IMR-90 (cell line): ENCODE measurements at regions of chr19 and their contacts with region 1.

Region 1: DNA sequence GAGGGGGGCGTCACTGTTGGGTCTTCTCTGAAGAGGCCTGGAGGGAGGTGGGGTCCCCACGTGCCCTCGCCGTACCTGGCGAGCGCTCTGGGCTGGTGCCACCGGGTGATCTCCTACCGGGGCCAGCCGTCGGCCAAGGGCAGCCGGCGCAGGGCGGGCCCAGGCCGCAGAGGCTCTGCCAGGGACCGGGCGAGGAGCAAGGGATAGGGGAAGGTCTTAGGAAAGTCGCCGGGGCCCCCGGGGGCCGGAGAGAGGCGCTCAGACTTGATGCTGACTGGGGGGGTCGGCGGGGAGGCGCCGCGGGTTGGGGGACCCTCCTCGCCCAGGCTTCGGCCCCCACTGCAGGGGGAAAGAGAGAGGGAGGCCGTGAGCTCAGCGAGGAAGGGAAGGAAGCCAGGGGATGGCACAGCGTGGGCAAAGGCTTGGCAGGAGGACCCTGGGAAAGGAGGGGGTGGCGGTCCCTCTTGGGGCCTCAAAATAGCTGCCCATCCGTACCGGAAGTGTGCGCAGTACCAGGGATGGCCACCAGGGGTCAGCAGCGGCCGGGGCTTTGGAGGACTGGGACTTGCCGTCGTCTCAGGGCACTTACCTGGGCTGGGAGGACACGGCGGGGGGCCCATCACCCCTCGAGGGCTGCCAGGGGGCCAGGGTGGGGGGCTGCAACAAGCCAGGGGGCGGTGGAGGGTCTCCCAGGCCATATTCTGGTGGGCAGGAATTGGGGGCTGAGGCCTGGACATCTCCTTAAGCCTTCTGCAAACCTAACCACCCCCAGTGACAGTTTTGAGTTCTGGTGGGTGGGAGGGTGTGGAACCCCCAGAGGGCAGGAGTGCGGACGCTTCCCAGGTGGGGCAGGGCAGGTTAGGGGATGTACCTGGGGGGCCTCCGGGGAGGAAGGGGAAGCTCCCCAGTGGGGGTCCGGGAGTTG is 7.7 kb upstream of the TMEM161A start:
- DNase-seq: peak; percentile 44
- ATAC-seq: peak; percentile 99
- H3K4me3 ChIP-seq: no peak overlapping the region
- H3K27ac ChIP-seq: peak overlapping the region; percentile 54
- H3K4me1 ChIP-seq: peaks cover 2% of the 10 kb centered on the region; the same call in 1 of the 2 replicates
- H3K27me3 ChIP-seq: no peaks in the 10 kb centered on the region
- CTCF ChIP-seq: peak; percentile 94
- POLR2A ChIP-seq: no peak
- RAD21 ChIP-seq: peak; percentile 87

Region 2: DNA sequence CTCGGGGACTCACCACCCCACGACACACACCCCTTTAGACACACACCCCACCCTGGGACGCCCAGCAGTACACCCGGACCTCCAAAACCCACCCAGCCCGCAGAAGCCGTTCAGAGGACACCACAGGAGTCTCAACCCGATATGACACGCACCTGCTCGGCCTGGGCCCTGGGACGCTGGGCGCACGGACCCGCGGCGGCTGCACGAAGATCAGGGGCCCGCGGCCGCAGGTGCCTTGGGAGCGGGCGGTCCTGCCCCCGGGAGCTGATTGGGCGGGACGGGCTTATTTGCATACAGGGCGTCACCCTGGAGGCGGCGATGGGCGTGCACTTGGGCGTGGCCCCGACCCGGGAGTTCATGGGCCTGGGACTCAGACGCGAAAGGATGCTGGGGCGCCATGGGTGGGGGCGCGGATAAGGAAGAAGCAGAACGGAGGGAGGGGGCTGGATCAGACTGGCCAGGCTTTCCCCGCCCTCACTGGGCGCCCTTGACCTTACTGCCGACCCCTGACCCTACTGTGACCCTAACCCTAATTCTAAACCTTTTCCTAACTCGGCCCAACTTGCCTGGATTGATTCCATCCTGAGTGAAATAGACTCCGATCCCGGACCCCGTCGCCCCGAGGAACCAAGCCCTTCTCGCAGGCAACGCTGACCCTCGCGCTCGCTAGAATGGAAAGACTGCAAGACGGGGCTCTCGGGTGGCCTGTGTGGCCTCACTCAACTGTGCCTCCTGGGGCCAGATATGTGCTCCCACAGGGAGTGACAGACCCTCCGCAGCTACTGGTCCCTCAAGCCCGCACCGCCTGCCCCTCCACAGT is 24.3 kb after region 1 on chr19 and contains the start of gene MEF2B:
- CTCF ChIA-PET with region 1: interaction called, 12 read pairs
- POLR2A ChIA-PET with region 1: interaction called, 4 read pairs
- dilution Hi-C with region 1: no loop called
- in situ Hi-C with region 1: no loop called
- intact Hi-C with region 1: loop called (anchors 1 kb)
- DNase-seq: peak; percentile 30
- ATAC-seq: peak; percentile 75
- H3K4me3 ChIP-seq: no peak within 1 kb of the TSS
- H3K27ac ChIP-seq: no peak within 1 kb of the TSS
- H3K4me1 ChIP-seq: peaks cover 24% of the 10 kb centered on the region
- H3K27me3 ChIP-seq: no peaks in the 10 kb centered on the region
- CTCF ChIP-seq: no peak
- POLR2A ChIP-seq: no peak
- RAD21 ChIP-seq: no peak
- total RNA-seq, gene MEF2B: under 0.01 and 0.18 TPM in 2 replicates

Region 3: GRCh38 chr19:19320362-19321142 is 174.6 kb after region 1 on chr19 and contains the starts of genes MAU2 and SUGP1:
- CTCF ChIA-PET with region 1: no interaction called
- POLR2A ChIA-PET with region 1: no interaction called
- dilution Hi-C with region 1: no loop called
- in situ Hi-C with region 1: no loop called
- intact Hi-C with region 1: loop called (anchors 10 kb)
- DNase-seq: peak; percentile 90
- ATAC-seq: peak; percentile 95
- H3K4me3 ChIP-seq: peak within 1 kb of the TSS; percentile 78
- H3K27ac ChIP-seq: peak within 1 kb of the TSS; percentile 96
- H3K4me1 ChIP-seq: peaks cover 5% of the 10 kb centered on the region
- H3K27me3 ChIP-seq: no peaks in the 10 kb centered on the region
- CTCF ChIP-seq: peak; percentile 36
- POLR2A ChIP-seq: peak; percentile 73
- RAD21 ChIP-seq: no peak
- total RNA-seq, gene MAU2: 21.7 and 24.6 TPM in 2 replicates
- total RNA-seq, gene SUGP1: 35.8 and 38.3 TPM in 2 replicates

Region 4: GRCh38 chr19:19562665-19563347 is 416.9 kb after region 1 on chr19:
- CTCF ChIA-PET with region 1: no interaction called
- POLR2A ChIA-PET with region 1: no interaction called
- dilution Hi-C with region 1: no loop called
- in situ Hi-C with region 1: no loop called
- intact Hi-C with region 1: no loop called
- DNase-seq: no peak
- ATAC-seq: no peak
- H3K4me3 ChIP-seq: no peak overlapping the region
- H3K27ac ChIP-seq: no peak overlapping the region
- H3K4me1 ChIP-seq: peaks cover 4% of the 10 kb centered on the region
- H3K27me3 ChIP-seq: no peaks in the 10 kb centered on the region
- CTCF ChIP-seq: no peak
- POLR2A ChIP-seq: no peak
- RAD21 ChIP-seq: 0 out of 2 replicates have a peak, but pooled peaks have one; percentile 4